ENCODE measurements at regions of chr10 and their contacts with region 1.

Region 1: DNA sequence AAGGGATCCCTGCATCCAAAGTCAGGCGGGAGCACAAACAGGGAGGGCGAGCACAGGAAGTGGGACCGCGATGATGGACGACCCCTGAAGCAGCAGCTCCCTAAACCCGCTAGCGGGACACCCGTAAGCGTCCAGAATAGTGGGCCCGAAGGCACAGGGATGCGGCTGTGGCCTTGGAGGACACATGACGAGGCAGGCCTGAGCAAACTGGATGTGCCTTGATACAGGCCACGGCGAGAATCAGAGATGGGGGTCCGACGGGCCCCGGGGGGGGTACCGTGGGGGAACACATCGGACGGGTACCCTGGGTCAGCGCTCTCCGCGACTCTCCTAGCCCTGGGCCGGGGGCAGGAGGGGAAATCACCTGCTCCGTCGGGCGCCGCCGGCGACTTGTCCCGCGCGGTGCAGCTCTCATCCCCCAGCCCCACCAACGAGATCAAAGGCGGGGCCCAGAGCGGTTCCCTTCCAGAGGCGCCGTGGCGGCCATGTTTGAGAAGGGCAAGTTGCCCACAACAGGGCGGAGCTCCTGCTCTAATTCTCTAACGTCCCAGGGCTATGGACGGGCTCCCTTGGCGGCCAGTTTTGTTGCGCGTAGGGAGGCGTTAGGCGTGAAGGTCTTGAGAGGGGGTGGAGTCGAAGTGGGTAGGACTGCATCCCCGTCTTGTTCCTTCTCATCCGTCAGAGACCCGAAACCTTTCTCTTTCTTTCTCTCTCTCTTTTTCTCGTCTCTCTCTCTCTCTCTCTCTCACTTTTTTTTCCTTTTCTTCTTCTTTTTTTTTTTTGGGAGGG is at the start of gene CUEDC2:
- DNase-seq: peak; percentile 99
- H3K4me3 Mint-ChIP-seq: peak within 1 kb of the TSS; percentile 90
- H3K27ac Mint-ChIP-seq: peak within 1 kb of the TSS; percentile 92
- H3K4me1 Mint-ChIP-seq: peaks cover 47% of the 10 kb centered on the region
- H3K27me3 Mint-ChIP-seq: no peaks in the 10 kb centered on the region
- total RNA-seq, gene CUEDC2: 63.3 to 64.4 TPM

Region 2: GRCh38 chr10:102450194-102450938 is 18.0 kb after region 1 on chr10:
- CTCF ChIA-PET with region 1: interaction called, 5 read pairs
- intact Hi-C with region 1: loop called (anchors 1 kb)
- DNase-seq: peak; percentile 82
- H3K4me3 Mint-ChIP-seq: peak overlapping the region; percentile 96
- H3K27ac Mint-ChIP-seq: peak overlapping the region; percentile 96
- H3K4me1 Mint-ChIP-seq: peaks cover 27% of the 10 kb centered on the region
- H3K27me3 Mint-ChIP-seq: no peaks in the 10 kb centered on the region

Region 3: DNA sequence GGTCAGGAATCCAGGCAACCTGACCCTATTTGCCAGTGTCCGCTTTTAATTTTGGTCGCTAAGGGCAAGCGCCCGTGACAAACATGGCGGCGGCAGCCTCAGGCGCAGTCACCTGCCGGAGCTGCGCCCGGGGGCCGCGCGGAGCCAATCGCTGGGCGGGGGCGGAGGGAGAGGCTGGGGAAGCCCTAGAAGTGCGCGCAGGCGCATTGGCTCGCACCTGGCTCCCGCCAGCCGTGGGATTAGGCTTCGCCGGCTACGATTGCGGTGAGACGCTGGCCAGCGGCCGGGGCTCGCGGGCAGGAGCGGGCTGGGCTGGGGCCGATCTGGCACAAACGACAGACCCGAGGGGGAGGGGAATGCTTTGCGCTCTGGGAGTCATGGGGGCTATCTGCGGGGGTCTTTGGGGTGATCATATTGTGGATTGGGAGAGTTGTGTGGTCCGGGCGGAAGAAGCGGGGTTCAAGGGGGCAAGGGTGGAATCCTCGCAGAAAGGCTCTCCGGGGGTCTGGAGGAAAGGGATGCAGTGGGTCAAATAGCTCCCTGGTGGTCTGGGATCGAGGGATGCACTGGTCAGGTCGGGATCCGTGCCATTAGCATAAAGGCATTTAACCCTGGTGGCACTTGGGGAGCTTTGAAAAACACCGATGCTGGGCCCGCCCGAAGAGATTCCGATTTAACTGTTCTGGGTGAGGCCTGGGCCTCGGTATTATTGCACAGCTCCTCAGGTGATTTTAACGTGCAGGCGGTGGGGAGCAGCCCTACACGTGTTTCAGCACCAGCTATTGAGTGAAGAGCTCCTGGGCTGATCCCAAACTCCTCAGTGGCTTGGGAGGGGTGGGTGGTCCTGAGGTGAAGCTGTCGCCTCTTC is 29.1 kb after region 1 on chr10:
- CTCF ChIA-PET with region 1: no interaction called
- intact Hi-C with region 1: loop called (anchors 1 kb)
- DNase-seq: peak; percentile 94
- H3K4me3 Mint-ChIP-seq: peak overlapping the region; percentile 88
- H3K27ac Mint-ChIP-seq: peak overlapping the region; percentile 73
- H3K4me1 Mint-ChIP-seq: peaks cover 23% of the 10 kb centered on the region
- H3K27me3 Mint-ChIP-seq: no peaks in the 10 kb centered on the region

Region 4: DNA sequence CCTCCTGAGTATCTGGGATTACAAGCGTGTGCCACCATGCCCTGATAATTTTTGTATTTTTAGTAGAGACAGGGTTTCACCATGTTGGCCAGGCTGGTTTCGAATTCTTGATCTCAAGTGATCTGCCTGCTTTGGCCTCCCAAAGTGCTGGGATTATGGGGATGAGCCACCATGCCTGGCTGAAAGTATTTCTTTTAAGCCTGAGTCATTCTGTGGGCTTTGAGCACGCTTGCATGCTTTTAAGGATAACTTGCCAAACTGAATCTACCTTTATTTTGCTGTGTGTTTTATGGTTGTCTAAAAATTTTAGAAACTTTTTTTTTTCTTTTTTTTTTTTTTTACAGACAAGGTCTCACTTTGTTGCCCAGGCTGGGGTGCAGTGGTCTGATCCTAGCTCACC is 519.0 kb after region 1 on chr10:
- CTCF ChIA-PET with region 1: no interaction called
- intact Hi-C with region 1: no loop called
- DNase-seq: no peak
- H3K4me3 Mint-ChIP-seq: no peak overlapping the region
- H3K27ac Mint-ChIP-seq: no peak overlapping the region
- H3K4me1 Mint-ChIP-seq: no peaks in the 10 kb centered on the region
- H3K27me3 Mint-ChIP-seq: no peaks in the 10 kb centered on the region